IMR-90 (cell line): ENCODE measurements at regions of chr16 and their contacts with region 1.

Region 1: GRCh38 chr16:22077700-22078313 is 14.5 kb upstream of the VWA3A start:
- DNase-seq: peak; percentile 60
- ATAC-seq: peak; percentile 71
- H3K4me3 ChIP-seq: no peak overlapping the region
- H3K27ac ChIP-seq: no peak overlapping the region
- H3K4me1 ChIP-seq: peaks cover 13% of the 10 kb centered on the region
- H3K27me3 ChIP-seq: no peaks in the 10 kb centered on the region
- CTCF ChIP-seq: peak; percentile 90
- POLR2A ChIP-seq: 0 out of 2 replicates have a peak, but pooled peaks have one; percentile 29
- RAD21 ChIP-seq: peak; percentile 86

Region 2: DNA sequence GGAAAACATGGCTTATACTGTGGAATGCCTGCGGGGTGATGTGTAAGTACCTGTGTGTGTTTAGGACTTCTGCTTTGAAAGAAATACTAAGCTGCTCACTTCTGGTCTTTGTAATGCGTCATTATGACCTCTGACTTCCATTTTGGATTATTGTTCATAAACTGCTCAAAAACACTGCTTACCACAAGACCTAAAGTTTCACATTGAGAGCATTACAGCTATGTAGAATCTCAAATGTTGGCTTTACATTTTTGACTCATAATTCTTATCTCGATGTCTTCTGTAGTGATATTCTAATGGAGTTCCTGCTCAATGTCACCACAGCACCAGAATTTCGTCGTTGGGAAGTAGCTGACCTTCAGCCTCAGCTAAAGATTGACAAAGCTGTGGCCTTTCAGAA is 115.3 kb before region 1 on chr16:
- CTCF ChIA-PET with region 1: no interaction called
- POLR2A ChIA-PET with region 1: no interaction called
- dilution Hi-C with region 1: no loop called
- in situ Hi-C with region 1: no loop called
- intact Hi-C with region 1: no loop called
- DNase-seq: no peak
- ATAC-seq: no peak
- H3K4me3 ChIP-seq: no peak overlapping the region
- H3K27ac ChIP-seq: no peak overlapping the region
- H3K4me1 ChIP-seq: peaks cover 1% of the 10 kb centered on the region; the same call in 1 of the 2 replicates
- H3K27me3 ChIP-seq: no peaks in the 10 kb centered on the region
- CTCF ChIP-seq: no peak
- POLR2A ChIP-seq: no peak
- RAD21 ChIP-seq: no peak

Region 3: GRCh38 chr16:21989133-21989532 is 88.7 kb before region 1 on chr16:
- CTCF ChIA-PET with region 1: interaction called, 10 read pairs
- POLR2A ChIA-PET with region 1: interaction called, 6 read pairs
- dilution Hi-C with region 1: no loop called
- in situ Hi-C with region 1: no loop called
- intact Hi-C with region 1: no loop called
- DNase-seq: peak; percentile 10
- ATAC-seq: no peak; the same call in 1 of the 2 replicates
- H3K4me3 ChIP-seq: no peak overlapping the region
- H3K27ac ChIP-seq: no peak overlapping the region
- H3K4me1 ChIP-seq: no peaks in the 10 kb centered on the region
- H3K27me3 ChIP-seq: no peaks in the 10 kb centered on the region
- CTCF ChIP-seq: no peak
- POLR2A ChIP-seq: no peak
- RAD21 ChIP-seq: no peak

Region 4: DNA sequence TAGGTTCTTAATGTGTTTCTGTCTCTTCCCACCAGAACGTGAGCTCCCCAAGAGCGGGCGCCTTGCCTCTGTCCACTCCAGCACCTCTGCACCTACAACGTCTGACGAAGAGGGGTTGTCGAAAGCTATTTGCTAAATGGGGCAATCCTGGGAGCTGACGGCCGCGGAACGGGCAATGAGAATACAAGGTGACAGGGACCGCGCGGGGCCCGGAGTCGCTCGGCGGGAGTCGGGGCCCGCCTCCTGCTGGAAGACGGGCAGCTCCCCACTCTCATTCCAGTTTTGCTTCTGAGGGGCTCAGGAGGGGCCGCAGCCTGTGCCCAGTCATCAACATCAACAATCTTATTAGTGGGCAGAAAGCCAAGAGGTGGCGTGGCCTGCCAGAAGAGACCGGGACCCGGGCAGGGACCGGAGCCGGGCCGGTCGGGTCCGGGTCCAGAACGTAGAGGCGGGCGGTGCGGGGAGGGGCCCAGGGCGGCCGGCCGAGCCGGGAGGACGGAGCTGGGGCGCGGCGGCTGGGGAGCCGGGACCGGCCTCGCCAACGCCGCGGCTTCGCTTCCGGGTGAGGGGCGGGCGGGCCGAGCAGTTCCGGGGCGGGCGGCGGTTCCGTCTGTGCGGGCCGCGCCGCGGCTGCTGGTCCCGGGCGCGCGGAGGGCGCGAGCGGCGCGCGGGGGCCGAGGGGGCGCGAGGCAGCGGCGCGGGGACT is 70.1 kb before region 1 on chr16 and contains the start of gene MOSMO:
- CTCF ChIA-PET with region 1: interaction called, 46 read pairs
- POLR2A ChIA-PET with region 1: interaction called, 11 read pairs
- dilution Hi-C with region 1: no loop called
- in situ Hi-C with region 1: loop called (anchors 5 kb)
- intact Hi-C with region 1: loop called (anchors 2 kb)
- DNase-seq: peak; percentile 63
- ATAC-seq: peak; percentile 92
- H3K4me3 ChIP-seq: peak within 1 kb of the TSS; percentile 92
- H3K27ac ChIP-seq: peak within 1 kb of the TSS; percentile 93
- H3K4me1 ChIP-seq: peaks cover 8% of the 10 kb centered on the region
- H3K27me3 ChIP-seq: no peaks in the 10 kb centered on the region
- CTCF ChIP-seq: 0 out of 2 replicates have a peak, but pooled peaks have one; percentile 8
- POLR2A ChIP-seq: peak; percentile 50; the same call in 1 of the 2 replicates
- RAD21 ChIP-seq: no peak
- total RNA-seq, gene MOSMO: 16.0 and 16.9 TPM in 2 replicates

Region 5: DNA sequence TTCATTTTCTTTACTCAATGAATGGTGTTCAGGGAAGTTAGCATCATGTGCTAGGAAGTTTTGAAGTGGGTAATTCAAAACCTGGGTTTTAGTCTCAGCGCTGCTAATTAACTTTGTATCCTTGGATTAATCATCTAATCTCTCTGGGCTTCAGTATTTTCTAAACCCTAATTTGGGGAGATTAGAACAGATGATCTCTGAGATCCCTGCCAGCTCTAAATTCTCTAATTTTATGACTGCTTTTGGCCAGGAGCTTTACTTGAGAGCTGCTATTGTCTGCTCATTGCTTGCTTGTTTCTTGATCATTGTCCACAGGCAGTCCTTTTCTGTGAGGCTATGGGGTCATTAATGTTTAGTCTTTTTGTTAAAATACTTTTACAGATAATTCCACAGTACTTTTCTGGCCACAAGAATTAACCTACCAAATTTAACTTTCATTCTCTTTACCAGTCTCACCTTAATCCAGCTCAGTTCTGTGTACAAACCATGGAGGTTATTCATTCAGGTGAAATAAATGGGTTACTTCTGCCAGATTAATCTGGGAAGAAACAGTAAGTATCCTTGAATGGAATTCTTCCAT is 13.8 kb before region 1 on chr16:
- CTCF ChIA-PET with region 1: interaction called, 18 read pairs
- POLR2A ChIA-PET with region 1: no interaction called
- dilution Hi-C with region 1: no loop called
- in situ Hi-C with region 1: no loop called
- intact Hi-C with region 1: no loop called
- DNase-seq: no peak
- ATAC-seq: no peak
- H3K4me3 ChIP-seq: no peak overlapping the region
- H3K27ac ChIP-seq: no peak overlapping the region
- H3K4me1 ChIP-seq: no peaks in the 10 kb centered on the region; the same call in 1 of the 2 replicates
- H3K27me3 ChIP-seq: no peaks in the 10 kb centered on the region
- CTCF ChIP-seq: no peak
- POLR2A ChIP-seq: no peak
- RAD21 ChIP-seq: no peak

Region 6: GRCh38 chr16:22190081-22190775 is 112.4 kb after region 1 on chr16:
- CTCF ChIA-PET with region 1: interaction called, 23 read pairs
- POLR2A ChIA-PET with region 1: no interaction called
- dilution Hi-C with region 1: no loop called
- in situ Hi-C with region 1: no loop called
- intact Hi-C with region 1: loop called (anchors 1 kb)
- DNase-seq: peak; percentile 4
- ATAC-seq: peak; percentile 77
- H3K4me3 ChIP-seq: peak overlapping the region; percentile 89
- H3K27ac ChIP-seq: peak overlapping the region; percentile 58
- H3K4me1 ChIP-seq: peaks cover 4% of the 10 kb centered on the region; the same call in 1 of the 2 replicates
- H3K27me3 ChIP-seq: no peaks in the 10 kb centered on the region
- CTCF ChIP-seq: no peak
- POLR2A ChIP-seq: no peak
- RAD21 ChIP-seq: no peak